A673 (cell line): ENCODE measurements at regions of chr7 and their contacts with region 1.

Region 1: DNA sequence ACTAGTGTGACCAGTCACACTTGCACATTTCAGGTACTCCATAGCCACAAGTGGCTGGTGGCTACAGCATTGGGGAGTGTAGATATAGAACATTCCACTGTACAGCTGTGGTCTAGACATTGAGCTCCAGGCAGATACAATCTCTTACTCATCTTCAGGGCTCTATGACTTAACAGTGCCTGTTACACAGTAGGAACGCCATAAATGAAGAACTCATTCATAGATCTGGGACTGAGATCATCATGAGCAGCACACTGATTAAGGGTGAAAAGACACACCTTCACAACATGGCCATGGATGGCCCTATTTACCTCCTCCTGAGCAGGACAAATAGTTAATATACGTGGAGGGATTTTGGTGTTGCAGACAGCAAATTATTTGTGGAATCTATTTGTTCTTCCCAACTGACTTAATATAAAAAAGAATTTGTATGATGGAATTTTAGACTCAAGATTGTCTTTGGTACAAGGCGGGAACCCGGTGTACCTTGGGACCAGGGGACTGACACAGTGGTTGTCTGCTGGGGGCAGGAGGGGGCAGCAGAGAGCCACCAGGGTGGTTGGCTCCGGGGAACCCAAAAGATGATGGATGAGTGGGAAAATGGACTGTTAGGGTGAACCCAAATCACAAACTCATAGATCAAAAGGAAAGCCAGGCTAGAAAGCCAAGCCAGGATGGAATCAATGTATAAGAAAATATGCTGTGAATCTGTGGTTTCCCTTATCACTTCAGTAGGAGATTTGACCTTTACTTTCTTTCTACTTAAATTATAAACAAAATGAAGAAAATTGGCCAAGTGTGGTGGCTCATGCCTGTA is 24.3 kb upstream of the CPA2 start:
- DNase-seq: peak; percentile 71
- H3K4me3 ChIP-seq: no peak overlapping the region
- H3K27ac ChIP-seq: no peak overlapping the region
- H3K4me1 ChIP-seq: no peaks in the 10 kb centered on the region
- H3K27me3 ChIP-seq: no peaks in the 10 kb centered on the region
- CTCF ChIP-seq: peak; percentile 91

Region 2: DNA sequence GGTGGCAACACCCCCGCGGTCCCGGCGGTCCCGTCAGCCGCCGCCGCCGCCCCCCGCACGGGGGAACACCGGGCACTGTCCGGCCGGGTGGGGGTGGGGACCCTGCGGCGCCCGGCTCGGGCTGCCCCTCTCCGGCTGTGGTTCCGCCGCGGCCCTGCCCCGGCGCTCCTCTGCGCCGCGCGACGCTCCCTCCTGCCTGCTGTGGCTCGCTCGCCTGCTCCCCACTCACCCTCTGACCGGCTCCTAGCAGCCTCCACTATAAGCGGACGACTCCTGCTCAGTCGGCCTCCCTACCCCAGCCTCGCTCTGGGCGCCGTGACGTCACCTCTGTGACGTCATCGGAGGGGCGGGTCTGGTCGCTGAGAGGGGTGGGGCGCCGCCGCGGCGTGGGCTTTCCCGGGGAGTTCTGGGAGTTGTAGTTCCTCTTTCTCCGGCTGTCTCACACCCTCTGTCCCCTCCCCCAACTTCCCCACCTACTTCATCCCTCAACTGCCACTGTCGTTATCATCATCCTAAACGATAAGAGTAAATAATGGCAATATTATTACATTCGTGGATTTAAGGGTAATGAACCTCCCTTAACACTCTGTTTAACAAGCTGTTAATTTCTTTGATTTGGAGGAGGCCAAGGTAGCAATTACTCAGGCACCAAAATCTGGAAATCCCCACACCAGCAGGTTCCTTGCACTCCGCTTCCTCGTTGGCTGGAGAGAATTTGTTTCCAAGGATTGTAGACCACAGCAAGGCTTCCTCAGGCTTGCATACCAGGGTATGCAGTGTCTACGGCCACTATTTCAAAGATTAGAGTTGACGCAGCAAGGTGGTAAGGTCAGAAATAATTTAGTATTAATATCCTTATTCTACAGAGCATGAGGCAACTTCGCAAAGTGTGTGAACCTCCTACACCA is 289.5 kb before region 1 on chr7 and contains the start of gene UBE2H:
- CTCF ChIA-PET with region 1: no interaction called
- POLR2A ChIA-PET with region 1: no interaction called
- intact Hi-C with region 1: no loop called
- DNase-seq: peak; percentile 93
- H3K4me3 ChIP-seq: peak within 1 kb of the TSS; percentile 85
- H3K27ac ChIP-seq: peak within 1 kb of the TSS; percentile 88
- H3K4me1 ChIP-seq: peaks cover 16% of the 10 kb centered on the region
- H3K27me3 ChIP-seq: no peaks in the 10 kb centered on the region
- CTCF ChIP-seq: no peak
- total RNA-seq, gene UBE2H: 28.8 and 35.2 TPM in 2 replicates

Region 3: GRCh38 chr7:130114374-130115135 is 127.9 kb before region 1 on chr7:
- CTCF ChIA-PET with region 1: no interaction called
- POLR2A ChIA-PET with region 1: no interaction called
- intact Hi-C with region 1: no loop called
- DNase-seq: no peak
- H3K4me3 ChIP-seq: no peak overlapping the region
- H3K27ac ChIP-seq: no peak overlapping the region
- H3K4me1 ChIP-seq: no peaks in the 10 kb centered on the region
- H3K27me3 ChIP-seq: no peaks in the 10 kb centered on the region
- CTCF ChIP-seq: no peak

Region 4: DNA sequence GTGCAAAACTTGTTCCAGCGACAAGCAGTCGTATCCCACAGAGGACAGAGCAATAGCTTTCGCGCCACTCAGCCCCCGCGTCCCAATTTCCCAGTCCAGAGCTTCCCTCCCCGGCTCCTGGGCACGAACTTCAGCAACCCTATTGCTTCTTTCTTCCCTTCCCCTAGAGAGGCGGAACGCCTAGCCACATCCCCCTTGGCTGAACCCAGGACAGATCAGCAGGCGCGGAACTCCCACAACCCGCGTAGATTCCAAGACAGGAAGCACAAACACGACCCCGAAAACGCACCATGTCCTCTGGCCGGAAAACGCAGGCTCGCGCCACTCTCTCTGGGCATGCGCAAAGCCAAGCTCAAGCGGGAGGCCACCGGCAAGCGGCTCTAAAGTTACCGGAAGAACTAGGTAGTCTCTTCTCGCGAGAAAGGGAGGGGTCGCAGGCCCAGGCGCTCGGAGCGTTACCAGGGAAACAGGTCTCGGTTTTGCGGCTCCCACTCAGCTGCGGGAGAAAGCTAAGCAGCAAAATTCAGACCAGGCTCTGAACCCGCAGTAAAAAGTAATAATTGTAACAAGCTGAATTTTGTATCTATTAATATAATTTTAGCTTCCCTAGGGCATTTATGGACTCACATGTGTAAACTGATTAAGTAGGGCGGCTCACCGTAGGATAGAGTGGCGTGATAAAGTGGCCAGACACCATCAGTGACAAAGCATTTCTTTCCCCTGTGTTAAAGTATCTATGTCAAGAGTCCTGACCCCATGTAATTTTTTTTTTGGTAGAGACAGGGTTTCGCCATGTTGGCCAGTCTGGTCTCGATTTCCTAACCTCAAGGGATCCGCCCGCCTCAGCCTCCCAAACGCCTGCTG is 37.1 kb before region 1 on chr7 and contains the start of gene TMEM209:
- CTCF ChIA-PET with region 1: no interaction called
- POLR2A ChIA-PET with region 1: interaction called, 13 read pairs
- intact Hi-C with region 1: no loop called
- DNase-seq: peak; percentile 99
- H3K4me3 ChIP-seq: peak within 1 kb of the TSS; percentile 76
- H3K27ac ChIP-seq: peak within 1 kb of the TSS; percentile 95
- H3K4me1 ChIP-seq: peaks cover 7% of the 10 kb centered on the region
- H3K27me3 ChIP-seq: no peaks in the 10 kb centered on the region
- CTCF ChIP-seq: no peak
- total RNA-seq, gene TMEM209: 45.8 and 46.7 TPM in 2 replicates

Region 5: DNA sequence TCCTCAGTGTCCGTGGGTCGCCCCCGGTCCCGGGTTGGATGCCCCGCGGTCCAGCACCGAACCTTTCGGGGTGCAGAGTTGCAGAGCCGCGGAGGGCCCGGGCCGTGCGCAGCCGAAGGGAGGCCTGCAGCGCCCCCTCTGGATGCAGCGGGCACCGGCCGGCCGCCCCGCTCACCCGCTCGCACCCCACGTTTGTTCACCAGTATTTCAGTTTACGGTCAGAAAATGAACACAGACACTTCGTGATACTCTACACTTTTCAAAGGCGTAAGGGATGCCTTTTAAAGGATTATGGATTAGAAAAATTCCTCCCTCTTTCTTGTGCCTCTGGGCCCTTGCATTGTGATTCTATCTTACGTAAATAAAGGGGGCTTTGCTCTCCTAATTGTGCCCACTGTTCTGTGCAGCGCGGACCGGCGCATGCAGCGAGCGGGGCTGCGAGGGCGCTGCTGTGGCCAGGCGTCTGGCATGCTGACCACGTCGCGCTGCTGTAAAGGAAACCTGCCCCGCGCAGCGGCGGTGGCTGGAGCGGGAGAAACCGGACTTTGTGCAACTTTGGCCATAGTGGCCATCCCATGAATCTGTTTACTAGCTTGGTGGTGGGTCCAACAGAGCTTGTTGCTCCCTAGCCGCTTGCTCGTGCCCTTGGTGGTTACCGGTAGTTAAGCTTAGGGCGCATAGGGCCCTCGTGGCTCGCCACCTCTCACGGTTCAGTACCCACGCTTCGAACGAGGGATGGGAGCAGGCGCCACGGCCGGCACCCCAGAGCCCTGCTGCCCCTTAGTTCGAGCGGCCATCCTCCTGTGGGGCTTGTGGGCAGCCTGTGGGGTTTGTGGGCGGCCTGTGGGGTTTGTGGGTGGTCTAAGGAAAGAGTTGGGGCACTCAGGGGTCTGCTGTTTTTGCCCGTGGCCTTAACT is 248.7 kb after region 1 on chr7:
- CTCF ChIA-PET with region 1: no interaction called
- POLR2A ChIA-PET with region 1: no interaction called
- intact Hi-C with region 1: loop called (anchors 5 kb)
- DNase-seq: no peak
- H3K4me3 ChIP-seq: peak overlapping the region; percentile 56
- H3K27ac ChIP-seq: no peak overlapping the region
- H3K4me1 ChIP-seq: peaks cover 3% of the 10 kb centered on the region
- H3K27me3 ChIP-seq: no peaks in the 10 kb centered on the region
- CTCF ChIP-seq: peak; percentile 52; the same call in 1 of the 2 replicates

Region 6: GRCh38 chr7:130695840-130696239 is 453.4 kb after region 1 on chr7:
- CTCF ChIA-PET with region 1: no interaction called
- POLR2A ChIA-PET with region 1: no interaction called
- intact Hi-C with region 1: loop called (anchors 1 kb)
- DNase-seq: peak; percentile 68
- H3K4me3 ChIP-seq: no peak overlapping the region
- H3K27ac ChIP-seq: no peak overlapping the region
- H3K4me1 ChIP-seq: no peaks in the 10 kb centered on the region
- H3K27me3 ChIP-seq: no peaks in the 10 kb centered on the region
- CTCF ChIP-seq: peak; percentile 76

Region 7: GRCh38 chr7:130758429-130759056 is 516.1 kb after region 1 on chr7:
- CTCF ChIA-PET with region 1: interaction called, 5 read pairs
- POLR2A ChIA-PET with region 1: no interaction called
- intact Hi-C with region 1: loop called (anchors 2 kb)
- DNase-seq: peak; percentile 71
- H3K4me3 ChIP-seq: no peak overlapping the region
- H3K27ac ChIP-seq: no peak overlapping the region
- H3K4me1 ChIP-seq: no peaks in the 10 kb centered on the region
- H3K27me3 ChIP-seq: no peaks in the 10 kb centered on the region
- CTCF ChIP-seq: peak; percentile 84

Region 8: GRCh38 chr7:130831817-130832481 is 589.5 kb after region 1 on chr7:
- CTCF ChIA-PET with region 1: no interaction called
- POLR2A ChIA-PET with region 1: no interaction called
- intact Hi-C with region 1: loop called (anchors 5 kb)
- DNase-seq: peak; percentile 59
- H3K4me3 ChIP-seq: no peak overlapping the region
- H3K27ac ChIP-seq: no peak overlapping the region
- H3K4me1 ChIP-seq: no peaks in the 10 kb centered on the region
- H3K27me3 ChIP-seq: no peaks in the 10 kb centered on the region
- CTCF ChIP-seq: peak; percentile 83